Sigmoid colon (tissue), 7 donors: ENCODE measurements at regions of chr18 and their contacts with region 1.

Region 1: GRCh38 chr18:26090130-26091046 is at the start of gene SS18:
- DNase-seq: peak; percentile 96
- H3K4me3 ChIP-seq: peak within 1 kb of the TSS; percentile 56 to 87 (median 80)
- H3K27ac ChIP-seq: peak within 1 kb of the TSS; percentile 85 to 99 (median 95)
- H3K4me1 ChIP-seq: peaks cover 0 to 34% (median 27%) of the 10 kb centered on the region in 4 donors
- H3K27me3 ChIP-seq: no peaks in the 10 kb centered on the region
- CTCF ChIP-seq: no peak
- EP300 ChIP-seq: peak in 1 of 4 donors; percentile 26
- POLR2A ChIP-seq: peak in 1 of 2 donors; percentile 65
- total RNA-seq, gene SS18: 89.2 to 204 (median 95.7) TPM

Region 2: DNA sequence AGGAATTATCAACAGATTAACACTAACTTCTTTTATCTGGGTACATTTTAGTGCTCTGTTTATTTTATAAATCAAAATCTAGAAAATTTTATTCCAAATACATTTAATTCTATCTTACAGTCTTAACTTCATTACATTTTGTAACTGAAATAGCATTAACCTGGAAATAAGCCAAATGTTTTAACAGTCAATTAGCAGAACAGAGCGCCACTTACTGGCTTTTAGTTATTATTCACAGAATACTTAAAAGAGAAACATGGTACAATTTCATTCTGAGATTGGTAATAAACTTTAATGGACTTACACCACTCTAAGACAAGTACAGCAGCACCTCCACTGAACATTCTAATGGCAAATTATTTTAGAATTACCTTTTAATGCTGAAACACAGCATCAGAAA is 38.5 kb before region 1 on chr18:
- intact Hi-C with region 1: no loop called
- DNase-seq: no peak
- H3K4me3 ChIP-seq: no peak overlapping the region
- H3K27ac ChIP-seq: no peak overlapping the region
- H3K4me1 ChIP-seq: no peaks in the 10 kb centered on the region
- H3K27me3 ChIP-seq: no peaks in the 10 kb centered on the region
- CTCF ChIP-seq: no peak
- EP300 ChIP-seq: no peak
- POLR2A ChIP-seq: no peak

Region 3: GRCh38 chr18:26225022-26225693 is 134.8 kb after region 1 on chr18:
- intact Hi-C with region 1: loop called (anchors 2 kb)
- DNase-seq: no peak
- H3K4me3 ChIP-seq: no peak overlapping the region
- H3K27ac ChIP-seq: peak overlapping the region in 1 of 4 donors; percentile 84
- H3K4me1 ChIP-seq: peaks cover 0 to 28% (median 18%) of the 10 kb centered on the region in 4 donors
- H3K27me3 ChIP-seq: no peaks in the 10 kb centered on the region
- CTCF ChIP-seq: no peak
- EP300 ChIP-seq: no peak
- POLR2A ChIP-seq: no peak

Region 4: DNA sequence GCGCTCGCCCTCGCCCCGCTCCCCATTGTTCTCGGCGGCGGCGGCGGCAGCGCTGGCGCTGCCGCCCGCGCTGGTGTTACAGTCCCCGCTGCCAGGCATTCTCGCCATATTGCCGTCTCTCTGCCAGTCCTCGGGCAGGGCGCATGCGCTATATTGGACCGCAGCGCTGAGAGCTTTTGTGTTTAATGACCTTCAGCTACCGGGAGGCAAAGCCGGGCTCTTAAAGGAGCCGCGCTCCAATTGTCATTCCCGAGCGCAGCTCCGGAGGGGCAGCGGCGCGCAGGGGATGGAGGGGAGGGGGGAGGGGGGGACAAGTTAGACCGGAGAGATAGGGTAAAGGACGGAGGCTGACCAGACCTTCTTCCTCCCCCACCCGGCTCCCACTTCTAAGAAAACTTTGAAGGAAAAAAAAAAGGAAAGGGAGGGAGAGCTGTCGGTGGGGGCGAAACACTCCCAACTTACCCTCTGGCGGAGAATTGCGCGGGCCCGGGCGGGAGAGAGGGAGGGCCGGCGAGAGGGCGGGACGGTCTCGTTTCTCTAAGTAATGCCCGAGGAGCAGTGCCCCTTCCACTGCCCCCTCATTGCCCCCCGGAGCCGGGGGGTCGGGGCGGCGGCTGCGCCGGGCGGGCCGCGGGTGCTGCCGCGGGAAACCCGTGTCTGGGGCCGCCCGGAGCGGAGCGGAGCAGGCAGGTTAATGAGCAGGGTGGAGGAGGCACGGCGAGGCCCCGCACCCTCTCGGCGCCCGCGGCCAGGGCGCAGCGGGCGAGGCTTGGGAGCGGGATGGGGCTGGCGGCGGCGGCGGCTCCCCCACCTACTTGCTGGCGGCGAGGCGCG is 458.3 kb after region 1 on chr18 and contains the start of gene KCTD1:
- intact Hi-C with region 1: loop called (anchors 10 kb)
- DNase-seq: peak; percentile 86
- H3K4me3 ChIP-seq: peak within 1 kb of the TSS; percentile 61 to 75 (median 70)
- H3K27ac ChIP-seq: peak within 1 kb of the TSS; percentile 55 to 74 (median 72)
- H3K4me1 ChIP-seq: peaks cover 0 to 56% (median 53%) of the 10 kb centered on the region in 4 donors
- H3K27me3 ChIP-seq: peaks cover 10 to 43% (median 34%) of the 10 kb centered on the region in 3 donors
- CTCF ChIP-seq: no peak
- EP300 ChIP-seq: no peak
- POLR2A ChIP-seq: no peak
- total RNA-seq, gene KCTD1: 7.1 to 22.4 (median 16.1) TPM

Region 5: GRCh38 chr18:26656944-26657536 is 566.7 kb after region 1 on chr18:
- intact Hi-C with region 1: loop called (anchors 5 kb)
- DNase-seq: peak; percentile 84
- H3K4me3 ChIP-seq: peak overlapping the region; percentile 67 to 92 (median 76)
- H3K27ac ChIP-seq: peak overlapping the region; percentile 83 to 91 (median 86)
- H3K4me1 ChIP-seq: peaks cover 0 to 27% (median 23%) of the 10 kb centered on the region in 4 donors
- H3K27me3 ChIP-seq: no peaks in the 10 kb centered on the region
- CTCF ChIP-seq: no peak
- EP300 ChIP-seq: no peak
- POLR2A ChIP-seq: no peak